ENCODE measurements at regions of chr6 and their contacts with region 1.

Region 1: GRCh38 chr6:62272114-62272513 is 13.9 kb downstream of the KHDRBS2 start:
- DNase-seq: no peak
- ATAC-seq: no peak
- H3K4me3 ChIP-seq: no peak overlapping the region
- H3K27ac ChIP-seq: no peak overlapping the region
- H3K4me1 ChIP-seq: no peaks in the 10 kb centered on the region
- H3K27me3 ChIP-seq: no peaks in the 10 kb centered on the region
- CTCF ChIP-seq: no peak
- EP300 ChIP-seq: no peak
- POLR2A ChIP-seq: no peak
- RAD21 ChIP-seq: no peak

Region 2: GRCh38 chr6:61977947-61978346 is 294.2 kb before region 1 on chr6:
- CTCF ChIA-PET with region 1: no interaction called
- POLR2A ChIA-PET with region 1: no interaction called
- in situ Hi-C with region 1: no loop called
- intact Hi-C with region 1: no loop called
- DNase-seq: no peak
- ATAC-seq: no peak
- H3K4me3 ChIP-seq: no peak overlapping the region
- H3K27ac ChIP-seq: no peak overlapping the region
- H3K4me1 ChIP-seq: no peaks in the 10 kb centered on the region
- H3K27me3 ChIP-seq: no peaks in the 10 kb centered on the region
- CTCF ChIP-seq: no peak
- EP300 ChIP-seq: no peak
- POLR2A ChIP-seq: no peak
- RAD21 ChIP-seq: no peak

Region 3: DNA sequence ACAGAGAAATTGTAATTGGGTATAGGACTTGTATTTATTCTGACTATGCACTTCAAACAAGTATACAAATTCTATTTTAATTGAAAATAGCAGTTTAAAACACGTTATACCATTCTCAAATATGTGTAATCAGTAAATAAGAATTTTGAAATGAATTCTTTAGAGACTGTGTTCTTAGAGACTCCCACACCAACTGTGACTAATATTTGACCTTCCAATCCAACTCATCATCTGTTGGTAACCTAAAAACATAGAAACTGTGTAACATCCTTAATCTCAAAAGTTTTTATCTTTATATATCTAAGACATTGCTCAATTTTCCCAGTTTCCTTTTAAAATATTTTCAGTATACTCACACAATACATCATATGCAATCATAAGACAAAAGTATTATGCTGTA is 70.0 kb before region 1 on chr6:
- CTCF ChIA-PET with region 1: no interaction called
- POLR2A ChIA-PET with region 1: no interaction called
- in situ Hi-C with region 1: no loop called
- intact Hi-C with region 1: no loop called
- DNase-seq: no peak
- ATAC-seq: no peak
- H3K4me3 ChIP-seq: no peak overlapping the region
- H3K27ac ChIP-seq: no peak overlapping the region
- H3K4me1 ChIP-seq: no peaks in the 10 kb centered on the region
- H3K27me3 ChIP-seq: no peaks in the 10 kb centered on the region
- CTCF ChIP-seq: no peak
- EP300 ChIP-seq: no peak
- POLR2A ChIP-seq: no peak
- RAD21 ChIP-seq: no peak

Region 4: DNA sequence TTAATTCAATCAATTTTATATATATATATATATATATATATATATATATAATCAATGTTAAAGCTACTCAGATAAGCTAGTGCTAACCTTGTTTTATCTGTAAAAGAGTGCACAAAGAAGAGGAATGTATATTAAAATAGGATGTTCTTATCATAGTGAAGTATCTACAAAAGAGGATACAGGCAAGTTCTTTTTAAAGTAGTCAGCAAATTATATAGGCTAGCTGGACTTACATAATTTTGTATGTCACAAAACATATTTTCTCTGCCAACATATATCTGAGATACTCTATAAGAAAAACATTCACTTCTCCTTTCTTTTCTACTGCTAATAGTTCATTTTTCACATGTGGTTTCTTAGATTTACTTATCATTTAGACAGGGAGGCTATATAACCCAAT is 26.0 kb before region 1 on chr6:
- CTCF ChIA-PET with region 1: no interaction called
- POLR2A ChIA-PET with region 1: no interaction called
- in situ Hi-C with region 1: no loop called
- intact Hi-C with region 1: no loop called
- DNase-seq: no peak
- ATAC-seq: no peak
- H3K4me3 ChIP-seq: no peak overlapping the region
- H3K27ac ChIP-seq: no peak overlapping the region
- H3K4me1 ChIP-seq: no peaks in the 10 kb centered on the region
- H3K27me3 ChIP-seq: no peaks in the 10 kb centered on the region
- CTCF ChIP-seq: no peak
- EP300 ChIP-seq: no peak
- POLR2A ChIP-seq: no peak
- RAD21 ChIP-seq: no peak

Region 5: DNA sequence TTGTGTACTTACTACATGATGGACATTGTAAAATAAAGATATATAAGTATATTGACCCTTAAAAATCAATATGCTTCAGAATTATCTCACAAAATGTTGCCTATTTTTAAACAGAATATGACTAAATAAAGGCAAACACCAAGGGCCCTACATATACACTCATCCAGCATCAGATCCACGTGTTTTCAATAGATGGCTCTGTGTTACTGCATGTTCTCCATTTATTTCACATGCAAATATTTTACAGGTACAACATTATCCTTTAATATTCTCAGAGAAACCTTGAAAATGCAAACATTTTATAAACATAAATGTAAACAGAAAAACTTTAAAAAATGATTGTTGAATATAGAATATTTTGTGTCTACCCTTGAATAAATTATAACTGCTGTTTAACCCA is 16.9 kb after region 1 on chr6:
- CTCF ChIA-PET with region 1: no interaction called
- POLR2A ChIA-PET with region 1: no interaction called
- in situ Hi-C with region 1: no loop called
- intact Hi-C with region 1: loop called (anchors 2 kb)
- DNase-seq: no peak
- ATAC-seq: no peak
- H3K4me3 ChIP-seq: no peak overlapping the region
- H3K27ac ChIP-seq: no peak overlapping the region
- H3K4me1 ChIP-seq: no peaks in the 10 kb centered on the region
- H3K27me3 ChIP-seq: no peaks in the 10 kb centered on the region
- CTCF ChIP-seq: no peak
- EP300 ChIP-seq: no peak
- POLR2A ChIP-seq: no peak
- RAD21 ChIP-seq: no peak

Measured in K562 (cell line).